ENCODE measurements at regions of chr4 and their contacts with region 1.

Region 1: GRCh38 chr4:119212234-119212963 is at the start of gene USP53:
- DNase-seq: peak; percentile 87 to 97
- ATAC-seq: peak; percentile 91 to 93
- H3K4me3 ChIP-seq: peak within 1 kb of the TSS; percentile 82
- H3K27ac ChIP-seq: peak within 1 kb of the TSS; percentile 95 to 97
- H3K4me1 ChIP-seq: peaks cover 51% of the 10 kb centered on the region
- CTCF ChIP-seq: no peak
- EP300 ChIP-seq: no peak
- POLR2A ChIP-seq: peak; percentile 76
- RAD21 ChIP-seq: no peak
- polyA plus RNA-seq, gene USP53: 37.3 and 50.7 TPM in 2 replicates

Region 2: DNA sequence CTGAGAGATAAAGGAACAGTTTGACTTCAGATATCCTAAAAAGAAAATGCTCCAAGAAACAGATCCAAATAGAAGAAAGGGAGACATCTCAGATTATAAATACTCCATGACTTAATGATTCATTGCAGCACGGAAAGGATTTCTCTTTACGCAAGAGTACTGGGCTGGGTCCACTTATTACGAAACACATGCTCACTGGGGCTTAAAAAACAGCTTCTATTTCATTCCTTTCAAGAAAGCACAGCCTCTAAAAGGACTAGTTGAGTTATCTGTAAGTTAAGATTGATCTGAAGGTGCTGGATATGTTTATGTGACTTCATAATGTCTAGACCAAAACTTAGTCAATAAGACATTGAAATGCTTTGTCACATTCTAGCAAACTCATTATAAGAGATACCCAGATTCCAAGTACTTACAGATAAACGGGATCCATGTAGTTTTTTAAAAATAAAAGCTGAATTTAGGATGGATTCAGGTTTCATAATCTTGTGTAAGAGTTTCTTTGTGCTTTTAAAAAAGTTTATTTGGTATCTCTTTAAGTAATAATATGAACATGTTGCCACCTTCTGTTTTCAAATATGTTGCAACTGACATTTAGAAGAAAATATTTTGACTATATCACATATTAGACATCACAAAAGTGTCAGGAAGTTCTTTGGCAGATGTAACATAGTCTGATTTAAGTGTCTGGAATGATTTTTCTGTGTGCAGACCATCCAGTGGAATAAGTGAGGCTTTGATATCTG is 186.3 kb before region 1 on chr4:
- CTCF ChIA-PET with region 1: no interaction called
- POLR2A ChIA-PET with region 1: interaction called, 17 read pairs
- DNase-seq: peak; percentile 38 to 85
- ATAC-seq: peak; percentile 62 to 82
- H3K4me3 ChIP-seq: peak overlapping the region; percentile 42
- H3K27ac ChIP-seq: peak overlapping the region; percentile 91 to 93
- H3K4me1 ChIP-seq: peaks cover 27% of the 10 kb centered on the region
- CTCF ChIP-seq: no peak
- EP300 ChIP-seq: no peak; a peak in 1 of 5 replicates
- POLR2A ChIP-seq: no peak
- RAD21 ChIP-seq: no peak

Region 3: GRCh38 chr4:119087121-119087520 is 125.3 kb before region 1 on chr4:
- CTCF ChIA-PET with region 1: interaction called, 9 read pairs
- POLR2A ChIA-PET with region 1: interaction called, 11 read pairs
- DNase-seq: peak in 1 of 2 experiments; percentile 31
- ATAC-seq: peak; percentile 47 to 79; a peak in 3 of 6 replicates
- H3K4me3 ChIP-seq: no peak overlapping the region
- H3K27ac ChIP-seq: peak overlapping the region; percentile 52 to 85
- H3K4me1 ChIP-seq: peaks cover 30% of the 10 kb centered on the region
- CTCF ChIP-seq: peak; percentile 41
- EP300 ChIP-seq: no peak
- POLR2A ChIP-seq: no peak
- RAD21 ChIP-seq: peak; percentile 44 to 49; a peak in 4 of 5 replicates

Region 4: GRCh38 chr4:119113033-119113655 is 99.3 kb before region 1 on chr4:
- CTCF ChIA-PET with region 1: interaction called, 3 read pairs
- POLR2A ChIA-PET with region 1: interaction called, 10 read pairs
- DNase-seq: peak; percentile 55 to 70
- ATAC-seq: peak; percentile 80 to 84; a peak in 5 of 6 replicates
- H3K4me3 ChIP-seq: no peak overlapping the region
- H3K27ac ChIP-seq: peak overlapping the region; percentile 57 to 66; a peak in 5 of 6 replicates
- H3K4me1 ChIP-seq: peaks cover 14% of the 10 kb centered on the region; the same call in 2 of the 3 replicates
- CTCF ChIP-seq: no peak
- EP300 ChIP-seq: no peak
- POLR2A ChIP-seq: no peak
- RAD21 ChIP-seq: no peak

Region 5: GRCh38 chr4:119184128-119184527 is 28.3 kb before region 1 on chr4:
- CTCF ChIA-PET with region 1: no interaction called
- POLR2A ChIA-PET with region 1: no interaction called
- DNase-seq: no peak
- ATAC-seq: no peak
- H3K4me3 ChIP-seq: no peak overlapping the region
- H3K27ac ChIP-seq: no peak overlapping the region
- H3K4me1 ChIP-seq: peaks cover 9% of the 10 kb centered on the region; the same call in 1 of the 3 replicates
- CTCF ChIP-seq: no peak
- EP300 ChIP-seq: no peak
- POLR2A ChIP-seq: no peak
- RAD21 ChIP-seq: no peak

Region 6: DNA sequence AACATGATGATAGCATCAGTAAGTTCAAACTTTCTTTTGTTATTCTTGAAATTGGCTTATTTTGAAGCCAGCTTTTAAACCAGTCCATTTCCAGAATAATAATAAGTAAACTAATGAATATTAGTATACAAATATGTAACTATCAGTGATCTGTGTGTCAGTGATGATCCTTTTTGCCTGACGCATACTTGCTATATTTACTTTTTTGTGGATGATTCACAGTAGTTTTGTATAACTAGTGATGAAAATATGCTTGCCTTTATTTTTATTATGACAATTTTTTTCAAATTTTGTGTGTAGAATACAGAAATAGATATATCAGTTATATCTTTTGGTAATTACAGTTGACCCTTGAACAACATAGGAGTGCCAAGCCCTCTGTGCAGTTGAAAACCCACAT is 49.6 kb after region 1 on chr4:
- CTCF ChIA-PET with region 1: no interaction called
- POLR2A ChIA-PET with region 1: no interaction called
- DNase-seq: no peak
- ATAC-seq: no peak
- H3K4me3 ChIP-seq: no peak overlapping the region
- H3K27ac ChIP-seq: no peak overlapping the region
- H3K4me1 ChIP-seq: peaks cover 10% of the 10 kb centered on the region; the same call in 2 of the 3 replicates
- CTCF ChIP-seq: no peak
- EP300 ChIP-seq: no peak
- POLR2A ChIP-seq: no peak
- RAD21 ChIP-seq: no peak

Region 7: DNA sequence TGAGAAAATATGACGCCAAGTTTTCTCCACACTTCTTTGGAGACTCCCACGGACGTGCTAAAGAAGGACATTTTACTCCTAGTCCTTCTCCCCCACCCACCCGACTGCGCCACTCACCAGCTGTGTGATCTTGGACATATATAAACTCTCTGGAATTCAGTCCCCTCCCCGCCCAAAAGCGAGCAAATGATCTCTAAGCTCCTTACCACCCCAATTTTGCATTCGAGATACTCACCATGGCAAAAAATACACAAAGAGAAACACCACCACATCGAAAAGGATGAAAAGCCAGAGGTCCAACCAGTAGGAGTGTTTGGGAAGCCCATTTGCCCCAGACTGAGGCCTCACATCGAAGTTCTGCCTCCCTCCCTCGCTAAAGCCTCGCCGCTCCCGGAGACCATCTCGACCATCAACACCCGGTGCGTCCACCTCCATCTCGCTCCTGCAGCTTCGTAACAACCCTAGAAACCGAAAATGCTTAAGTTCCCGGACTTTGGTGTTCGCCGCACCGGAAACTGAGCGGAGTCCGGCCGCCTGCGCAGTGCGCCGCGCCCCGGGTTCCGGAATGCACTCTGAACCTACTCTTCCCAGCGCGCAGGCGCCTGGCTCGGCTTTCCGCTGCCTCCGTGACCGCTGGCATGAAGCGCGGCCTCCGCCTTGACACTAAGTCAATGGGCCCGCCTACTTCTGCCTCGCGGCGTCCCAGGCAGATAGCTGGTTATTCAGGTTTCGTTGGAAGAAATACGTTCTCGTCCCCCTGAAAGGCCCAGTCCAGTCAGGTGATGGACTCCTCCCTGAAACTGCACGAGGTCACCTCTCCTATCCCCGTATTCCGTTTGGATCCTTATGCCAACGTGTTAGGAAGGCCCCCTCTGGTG is 87.9 kb after region 1 on chr4:
- CTCF ChIA-PET with region 1: no interaction called
- POLR2A ChIA-PET with region 1: interaction called, 15 read pairs
- DNase-seq: peak; percentile 66 to 93
- ATAC-seq: peak; percentile 96 to 98
- H3K4me3 ChIP-seq: peak overlapping the region; percentile 89
- H3K27ac ChIP-seq: peak overlapping the region; percentile 88 to 91
- H3K4me1 ChIP-seq: peaks cover 13% of the 10 kb centered on the region; the same call in 2 of the 3 replicates
- CTCF ChIP-seq: no peak
- EP300 ChIP-seq: no peak
- POLR2A ChIP-seq: peak; percentile 12
- RAD21 ChIP-seq: no peak

Region 8: GRCh38 chr4:119666653-119667091 is 454.3 kb after region 1 on chr4:
- CTCF ChIA-PET with region 1: no interaction called
- POLR2A ChIA-PET with region 1: no interaction called
- DNase-seq: no peak
- ATAC-seq: no peak
- H3K4me3 ChIP-seq: no peak overlapping the region
- H3K27ac ChIP-seq: no peak overlapping the region
- H3K4me1 ChIP-seq: no peaks in the 10 kb centered on the region
- CTCF ChIP-seq: no peak
- EP300 ChIP-seq: no peak
- POLR2A ChIP-seq: no peak
- RAD21 ChIP-seq: no peak